Naive thymus-derived CD4-positive, alpha-beta T cell (primary cell): ENCODE measurements at regions of chr2 and their contacts with region 1.

Region 1: DNA sequence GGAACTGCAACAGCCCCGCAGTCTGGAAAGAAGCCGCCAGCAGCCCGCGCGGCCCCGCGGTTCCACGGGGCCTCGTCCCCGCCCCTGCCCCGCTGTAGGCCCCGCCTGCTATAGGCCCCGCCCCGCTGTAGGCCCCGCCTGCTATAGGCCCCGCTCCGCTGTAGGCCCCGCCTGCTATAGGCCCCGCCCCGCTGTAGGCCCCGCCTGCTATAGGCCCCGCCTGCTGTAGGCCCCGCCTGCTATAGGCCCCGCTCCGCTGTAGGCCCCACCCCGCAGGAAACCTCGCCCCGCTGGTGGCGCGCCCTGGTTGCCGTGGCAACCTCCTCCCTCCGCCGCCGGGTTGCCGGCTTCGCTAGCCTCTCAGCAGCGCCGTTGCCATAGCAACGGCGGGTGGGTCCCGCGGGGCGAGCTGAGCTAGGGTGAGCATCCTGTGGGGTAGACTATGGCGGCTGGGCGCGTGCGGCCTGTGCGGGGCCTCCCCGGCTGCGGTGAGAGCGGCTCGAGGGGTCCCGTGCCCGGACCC is 12.2 kb upstream of the KIF1A start:
- DNase-seq: peak; percentile 93 to 100 (median 99)
- ATAC-seq: peak; percentile 96
- H3K4me3 ChIP-seq: peak overlapping the region; percentile 32
- H3K4me3 Mint-ChIP-seq: peak overlapping the region in 8 of 10 donors; percentile 56 to 78 (median 71)
- H3K27ac ChIP-seq: no peak overlapping the region
- H3K27ac Mint-ChIP-seq: peak overlapping the region in 4 of 9 donors; percentile 22 to 88 (median 74)
- H3K4me1 ChIP-seq: peaks cover 11 to 14% of the 10 kb centered on the region in 2 donors
- H3K4me1 Mint-ChIP-seq: peaks cover 0 to 7% (median 0%) of the 10 kb centered on the region in 7 donors
- H3K27me3 ChIP-seq: no peaks in the 10 kb centered on the region
- H3K27me3 Mint-ChIP-seq: peaks cover 4 to 30% (median 19%) of the 10 kb centered on the region in 5 donors

Region 2: GRCh38 chr2:240434728-240435456 is 397.4 kb before region 1 on chr2:
- CTCF ChIA-PET with region 1: no interaction called
- POLR2A ChIA-PET with region 1: no interaction called
- intact Hi-C with region 1: loop called (anchors 5 to 10 kb)
- DNase-seq: peak; percentile 70 to 91 (median 81)
- ATAC-seq: peak; percentile 89
- H3K4me3 ChIP-seq: peak overlapping the region; percentile 48
- H3K4me3 Mint-ChIP-seq: peak overlapping the region; percentile 81 to 89 (median 86)
- H3K27ac ChIP-seq: no peak overlapping the region
- H3K27ac Mint-ChIP-seq: peak overlapping the region in 6 of 9 donors; percentile 14 to 77 (median 57)
- H3K4me1 ChIP-seq: peaks cover 0 to 6% of the 10 kb centered on the region in 2 donors
- H3K4me1 Mint-ChIP-seq: peaks cover 0 to 11% (median 4%) of the 10 kb centered on the region in 7 donors
- H3K27me3 ChIP-seq: peaks cover 0 to 12% of the 10 kb centered on the region in 2 donors
- H3K27me3 Mint-ChIP-seq: peaks cover 12 to 33% (median 21%) of the 10 kb centered on the region in 5 donors

Region 3: DNA sequence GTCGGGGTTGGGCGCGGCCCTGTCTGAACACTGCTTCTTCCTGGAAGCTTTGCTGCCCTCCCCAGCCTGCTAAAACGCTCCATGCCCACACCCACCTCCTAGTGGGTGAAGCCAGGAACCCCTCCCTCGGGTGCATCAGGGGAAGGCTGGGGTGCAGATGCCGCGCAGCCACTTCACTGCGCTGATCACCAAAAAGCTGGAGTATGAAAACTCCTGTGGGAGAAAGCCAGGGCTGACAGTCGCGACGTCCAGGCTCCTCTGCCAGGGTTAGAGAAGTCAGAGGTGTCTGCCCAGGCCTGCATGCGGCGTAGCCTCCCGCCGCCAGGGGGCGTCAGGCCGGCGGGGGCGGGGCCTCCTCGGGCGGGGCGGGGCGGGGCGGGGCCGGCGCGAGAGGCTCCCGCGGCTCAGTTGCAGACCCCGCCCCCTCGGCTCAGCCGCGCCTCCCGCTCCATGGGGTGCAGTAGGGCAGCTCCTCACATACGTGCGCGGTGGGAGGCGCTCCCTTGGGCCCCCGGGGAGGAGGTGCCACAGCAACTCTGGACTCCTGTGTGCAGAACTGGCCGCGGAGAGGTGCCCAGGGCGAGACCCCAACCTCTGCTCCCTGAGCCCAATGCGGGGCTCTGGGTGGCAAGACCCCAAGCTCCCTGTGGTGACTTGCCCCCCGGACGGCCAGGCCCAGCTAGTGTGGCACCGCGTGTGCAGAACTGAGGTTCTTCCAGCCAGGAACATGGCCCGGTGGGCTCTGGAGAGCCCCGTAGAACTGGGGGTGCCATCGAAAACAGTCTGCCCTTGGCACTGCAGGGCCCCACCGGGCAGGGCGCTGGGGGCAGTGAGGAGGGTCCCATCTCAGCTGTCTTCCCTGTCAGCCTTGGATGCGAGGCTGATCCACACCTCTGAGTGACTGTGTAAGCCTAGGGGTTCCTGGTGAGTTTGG is 265.8 kb before region 1 on chr2:
- CTCF ChIA-PET with region 1: no interaction called
- POLR2A ChIA-PET with region 1: interaction called, 5 read pairs
- intact Hi-C with region 1: loop called (anchors 1 kb)
- DNase-seq: peak; percentile 86 to 96 (median 92)
- ATAC-seq: peak; percentile 79
- H3K4me3 ChIP-seq: peak overlapping the region; percentile 82
- H3K4me3 Mint-ChIP-seq: peak overlapping the region; percentile 88 to 98 (median 94)
- H3K27ac ChIP-seq: peak overlapping the region; percentile 85
- H3K27ac Mint-ChIP-seq: peak overlapping the region; percentile 90 to 99 (median 98)
- H3K4me1 ChIP-seq: peaks cover 80% of the 10 kb centered on the region in 2 donors
- H3K4me1 Mint-ChIP-seq: peaks cover 53 to 82% (median 75%) of the 10 kb centered on the region in 7 donors
- H3K27me3 ChIP-seq: no peaks in the 10 kb centered on the region
- H3K27me3 Mint-ChIP-seq: no peaks in the 10 kb centered on the region

Region 4: DNA sequence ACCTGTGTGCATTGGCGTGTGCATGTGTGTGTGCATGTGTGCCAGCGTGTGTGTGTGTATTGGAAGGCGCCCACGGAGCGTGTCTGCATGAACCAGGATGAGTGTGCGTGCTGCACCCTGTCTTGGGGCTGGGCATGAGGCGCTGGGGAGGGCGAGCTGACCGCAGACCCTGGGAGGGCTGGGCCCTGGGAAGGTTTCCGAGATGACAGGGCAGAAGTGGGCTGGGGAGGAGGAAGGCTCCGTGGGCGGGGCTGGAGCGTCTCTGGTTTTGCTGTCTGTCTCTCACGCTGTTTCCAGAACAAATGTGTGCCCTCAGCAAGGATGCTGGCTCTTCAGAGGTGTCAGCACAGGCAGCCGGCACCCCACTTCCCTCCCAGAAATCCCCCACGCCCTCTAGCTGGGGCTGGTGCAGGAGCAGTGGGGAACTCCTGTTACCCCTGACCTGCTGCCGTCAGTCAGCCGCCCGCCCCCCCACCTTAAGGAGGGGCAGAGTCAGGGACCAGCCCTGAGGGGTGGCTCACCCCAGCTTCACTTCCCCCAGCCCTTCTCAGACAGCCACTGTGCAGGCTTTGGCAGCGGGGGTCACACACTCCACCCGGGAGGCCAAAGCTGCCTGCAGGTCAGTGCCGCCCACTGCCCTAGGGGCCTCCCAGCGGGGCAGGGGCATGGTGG is 207.2 kb before region 1 on chr2 and contains the start of gene GPR35:
- CTCF ChIA-PET with region 1: no interaction called
- POLR2A ChIA-PET with region 1: no interaction called
- intact Hi-C with region 1: loop called in 1 of 2 experiments (anchors 1 kb)
- DNase-seq: peak; percentile 34 to 88 (median 56)
- ATAC-seq: peak; percentile 86
- H3K4me3 ChIP-seq: peak within 1 kb of the TSS; percentile 24
- H3K4me3 Mint-ChIP-seq: peak within 1 kb of the TSS; percentile 57 to 83 (median 71)
- H3K27ac ChIP-seq: peak within 1 kb of the TSS; percentile 69
- H3K27ac Mint-ChIP-seq: peak within 1 kb of the TSS; percentile 47 to 93 (median 90)
- H3K4me1 ChIP-seq: peaks cover 59 to 76% of the 10 kb centered on the region in 2 donors
- H3K4me1 Mint-ChIP-seq: peaks cover 18 to 68% (median 54%) of the 10 kb centered on the region in 7 donors
- H3K27me3 ChIP-seq: no peaks in the 10 kb centered on the region
- H3K27me3 Mint-ChIP-seq: no peaks in the 10 kb centered on the region
- total RNA-seq, gene GPR35: 7.1 to 19.0 (median 10.2) TPM

Region 5: DNA sequence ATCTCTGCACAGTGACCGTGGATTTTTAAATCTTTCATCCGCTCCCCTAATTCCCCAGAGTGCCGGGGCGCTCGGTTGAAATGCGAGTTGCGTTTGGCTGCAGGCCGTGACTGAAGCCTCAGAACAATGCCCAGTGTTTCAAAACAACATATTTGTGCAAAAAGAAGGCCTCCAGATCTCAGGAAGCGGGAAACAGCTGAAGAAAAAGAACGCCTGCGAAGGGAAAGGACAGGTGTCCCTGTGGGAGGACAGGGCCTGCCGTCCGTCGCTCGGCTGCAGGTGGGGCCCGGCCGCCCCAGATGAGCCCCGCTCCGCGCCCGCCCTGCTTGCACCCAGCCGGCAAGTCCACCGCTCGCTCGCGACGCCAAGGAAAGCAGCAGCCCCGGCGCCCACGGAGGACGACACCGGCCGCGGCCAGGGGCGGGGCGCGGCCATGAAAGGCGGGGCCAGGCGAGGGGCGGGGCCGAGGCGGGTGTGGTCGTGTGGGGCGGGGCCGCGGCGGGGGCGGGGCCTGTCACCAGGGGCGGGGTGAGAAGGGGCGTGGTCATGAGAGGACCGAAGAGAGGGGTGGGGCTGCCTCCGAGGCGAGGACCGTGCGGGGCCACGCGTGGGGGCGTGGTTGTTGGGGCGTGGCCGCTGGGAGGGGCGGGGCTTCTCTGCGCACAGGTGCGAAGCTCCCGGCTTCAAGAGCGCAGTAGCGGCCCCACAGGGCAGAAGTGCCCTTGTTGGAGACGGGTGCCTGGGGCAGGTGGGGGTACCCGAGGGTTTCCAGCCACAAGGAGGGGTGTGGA is 708.7 kb after region 1 on chr2:
- CTCF ChIA-PET with region 1: no interaction called
- POLR2A ChIA-PET with region 1: no interaction called
- intact Hi-C with region 1: loop called in 1 of 2 experiments (anchors 2 kb)
- DNase-seq: peak; percentile 37 to 82 (median 49)
- ATAC-seq: peak; percentile 92
- H3K4me3 ChIP-seq: no peak overlapping the region
- H3K4me3 Mint-ChIP-seq: peak overlapping the region; percentile 53 to 84 (median 62)
- H3K27ac ChIP-seq: no peak overlapping the region
- H3K27ac Mint-ChIP-seq: no peak overlapping the region
- H3K4me1 ChIP-seq: no peaks in the 10 kb centered on the region
- H3K4me1 Mint-ChIP-seq: peaks cover 0 to 8% (median 4%) of the 10 kb centered on the region in 7 donors
- H3K27me3 ChIP-seq: peaks cover 0 to 3% of the 10 kb centered on the region in 2 donors
- H3K27me3 Mint-ChIP-seq: peaks cover 11 to 29% (median 19%) of the 10 kb centered on the region in 5 donors

Region 6: DNA sequence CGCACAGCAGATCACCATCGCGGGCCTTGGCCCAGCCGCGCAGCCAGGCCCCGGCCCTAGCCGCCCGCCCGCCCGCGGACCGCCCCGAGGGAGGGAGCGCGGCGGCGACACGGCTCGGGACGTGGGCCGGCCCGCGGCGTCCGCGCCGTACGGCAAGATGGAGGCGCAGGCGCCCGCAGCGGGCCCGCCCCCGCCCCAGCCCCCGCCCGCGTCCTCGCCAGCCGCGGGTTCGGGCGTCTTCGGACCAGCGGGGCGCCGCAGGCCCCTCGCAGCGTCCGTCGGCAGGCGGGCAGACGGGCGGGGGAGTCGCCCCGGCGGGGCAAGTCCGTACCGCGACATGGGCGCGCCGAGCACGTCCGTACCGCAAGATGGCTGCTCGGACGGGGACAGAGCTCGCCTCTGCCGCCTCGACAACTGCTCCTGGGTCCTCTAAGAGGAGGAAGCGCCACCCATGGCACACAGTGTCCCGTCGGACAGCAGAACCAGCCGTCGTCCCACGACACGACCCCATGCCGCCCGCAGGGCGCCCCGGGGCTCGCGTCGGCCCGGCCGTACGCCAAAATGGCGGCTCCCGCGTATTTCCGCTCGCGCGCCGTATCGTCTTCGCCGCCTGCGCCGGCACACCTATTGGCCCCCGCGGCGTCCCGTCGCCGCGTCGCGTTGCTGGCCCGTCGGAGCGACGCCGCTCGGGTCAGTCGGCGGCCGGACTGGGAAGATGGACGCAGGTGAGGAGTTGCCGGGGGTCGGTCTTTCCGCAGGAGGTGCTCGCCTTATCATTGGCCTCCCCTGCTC is 804.9 kb after region 1 on chr2 and contains the starts of genes ATG4B and THAP4:
- CTCF ChIA-PET with region 1: no interaction called
- POLR2A ChIA-PET with region 1: no interaction called
- intact Hi-C with region 1: loop called in 1 of 2 experiments (anchors 1 kb)
- DNase-seq: peak; percentile 61 to 89 (median 79)
- ATAC-seq: peak; percentile 82
- H3K4me3 ChIP-seq: peak within 1 kb of the TSS; percentile 99
- H3K4me3 Mint-ChIP-seq: peak within 1 kb of the TSS; percentile 85 to 98 (median 92)
- H3K27ac ChIP-seq: peak within 1 kb of the TSS; percentile 99
- H3K27ac Mint-ChIP-seq: peak within 1 kb of the TSS; percentile 48 to 98 (median 94)
- H3K4me1 ChIP-seq: peaks cover 26 to 27% of the 10 kb centered on the region in 2 donors
- H3K4me1 Mint-ChIP-seq: peaks cover 43 to 63% (median 55%) of the 10 kb centered on the region in 7 donors
- H3K27me3 ChIP-seq: no peaks in the 10 kb centered on the region
- H3K27me3 Mint-ChIP-seq: no peaks in the 10 kb centered on the region
- total RNA-seq, gene ATG4B: 87.2 to 131 (median 95.0) TPM
- total RNA-seq, gene THAP4: 26.4 to 34.8 (median 28.1) TPM